HEK293T (cell line): ENCODE measurements at regions of chr17 and their contacts with region 1.

Region 1: DNA sequence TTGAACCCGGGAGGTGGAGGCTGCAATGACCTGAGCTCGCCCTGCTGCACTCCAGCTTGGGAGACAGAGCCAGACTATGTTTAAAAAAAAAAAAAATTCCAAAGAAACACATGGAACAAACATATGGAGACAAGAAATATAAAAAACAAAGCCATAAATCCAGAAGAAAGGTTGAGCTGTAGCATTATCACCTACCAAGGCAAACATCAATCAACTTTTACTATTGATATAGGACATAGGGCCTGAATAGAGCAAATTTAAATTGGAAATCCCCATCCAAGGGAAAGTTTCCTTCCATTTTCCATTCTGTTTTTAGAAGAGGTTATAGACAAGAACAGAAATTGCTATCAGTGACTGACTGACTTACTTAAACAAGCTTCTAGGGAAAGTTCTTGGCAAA is 56.6 kb downstream of the SSH2 start:
- DNase-seq: no peak

Region 2: GRCh38 chr17:29855686-29856085 is 17.8 kb before region 1 on chr17:
- CTCF ChIA-PET with region 1: interaction called, 10 read pairs
- POLR2A ChIA-PET with region 1: no interaction called
- DNase-seq: no peak